Sciatic nerve (tissue), 2 donors: ENCODE measurements at regions of chr5 and their contacts with region 1.

Region 1: DNA sequence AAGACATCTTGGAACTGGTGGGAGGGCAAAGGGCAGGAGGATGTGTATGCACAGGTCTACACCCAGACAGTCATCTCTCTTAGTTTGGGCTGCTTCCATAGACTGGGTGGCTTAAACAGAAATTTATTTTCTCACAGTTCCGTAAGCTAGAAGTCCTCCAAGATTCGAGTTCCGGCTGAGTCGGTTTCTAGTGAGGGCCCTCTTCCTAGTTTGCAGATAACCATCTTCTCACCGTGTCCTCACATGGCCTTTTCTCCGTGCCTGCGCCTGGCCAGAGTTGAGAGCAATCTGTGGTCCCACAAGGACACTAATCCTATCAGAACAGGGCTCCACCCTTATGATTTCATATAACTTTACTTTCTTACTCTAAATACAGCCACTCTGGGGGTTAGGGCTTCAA is 4.1 kb downstream of the SMIM32 start:
- DNase-seq: no peak
- ATAC-seq: no peak

Region 2: GRCh38 chr5:136905574-136905973 is 716.7 kb after region 1 on chr5:
- intact Hi-C with region 1: loop called (anchors 5 kb)
- DNase-seq: no peak
- ATAC-seq: no peak